ENCODE measurements at regions of chr4 and their contacts with region 1.

Region 1: DNA sequence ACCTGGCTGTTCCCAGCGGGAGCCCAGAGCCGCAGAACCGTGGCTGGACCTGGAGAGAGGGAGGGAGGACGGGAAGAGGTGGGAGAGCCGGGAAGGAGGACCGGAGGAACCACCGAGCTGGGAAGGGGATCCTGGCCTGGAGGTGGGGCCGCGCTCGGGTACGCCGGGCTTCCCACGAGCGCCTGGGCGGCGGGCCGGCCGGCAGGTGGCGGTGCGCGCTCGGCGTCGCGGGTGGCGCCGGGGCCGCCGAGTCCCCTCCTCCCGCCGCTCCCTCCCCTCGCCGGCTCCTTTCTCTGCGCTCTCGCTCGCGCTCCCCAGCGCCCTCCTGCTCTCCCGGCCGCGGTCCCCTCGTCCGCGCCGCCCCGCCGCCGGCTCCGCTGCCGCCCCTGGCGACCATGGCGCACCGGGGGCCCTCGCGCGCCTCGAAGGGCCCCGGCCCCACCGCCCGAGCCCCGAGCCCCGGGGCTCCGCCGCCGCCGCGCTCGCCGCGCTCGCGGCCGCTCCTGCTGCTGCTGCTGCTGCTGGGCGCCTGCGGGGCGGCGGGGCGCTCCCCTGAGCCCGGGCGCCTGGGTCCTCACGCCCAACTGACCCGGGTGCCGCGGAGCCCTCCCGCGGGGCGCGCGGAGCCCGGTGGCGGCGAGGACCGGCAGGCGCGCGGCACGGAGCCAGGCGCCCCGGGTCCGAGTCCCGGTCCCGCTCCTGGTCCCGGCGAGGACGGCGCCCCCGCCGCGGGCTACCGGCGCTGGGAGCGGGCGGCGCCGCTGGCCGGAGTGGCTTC is at the start of gene SORCS2:
- DNase-seq: no peak
- ATAC-seq: peak; percentile 83
- total RNA-seq, gene SORCS2: 1.1 TPM

Region 2: DNA sequence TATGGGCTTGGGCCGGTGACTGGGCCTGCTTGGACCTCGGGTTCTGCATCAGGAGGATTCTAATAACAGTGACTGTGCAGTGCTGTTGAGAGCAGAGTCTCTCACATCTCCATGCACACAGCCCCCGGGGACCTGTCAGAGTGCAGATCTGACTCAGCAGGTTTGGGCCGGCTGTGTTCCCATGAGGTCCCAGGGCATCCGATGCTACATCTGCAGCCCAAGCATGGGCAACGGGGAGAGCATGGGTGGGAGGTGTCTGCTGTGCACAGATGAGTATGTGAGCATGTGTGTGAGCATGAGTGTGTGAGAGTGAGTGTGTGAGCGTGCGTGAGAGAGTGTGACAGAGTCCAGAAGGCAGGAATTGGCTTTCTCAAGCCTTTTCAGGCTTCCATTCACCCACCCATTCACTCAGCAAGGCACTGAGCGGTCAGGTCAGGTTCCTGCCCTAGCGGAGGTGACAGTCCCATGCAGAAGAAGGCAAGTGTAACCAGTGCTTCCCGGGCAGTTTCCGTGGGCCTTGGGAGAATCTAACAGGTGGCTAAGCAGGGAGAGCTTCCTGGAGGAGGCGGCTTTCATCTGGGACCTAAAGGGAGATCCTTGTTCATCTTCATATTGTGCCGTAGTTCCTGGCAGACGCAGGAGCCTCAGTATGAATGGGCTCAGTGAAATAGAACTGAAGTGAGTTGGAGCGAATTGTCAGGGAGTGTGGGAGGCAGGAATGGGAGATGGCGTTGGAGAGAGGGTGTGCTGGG is 62.5 kb after region 1 on chr4:
- intact Hi-C with region 1: loop called (anchors 5 kb)
- DNase-seq: no peak
- ATAC-seq: no peak

Region 3: DNA sequence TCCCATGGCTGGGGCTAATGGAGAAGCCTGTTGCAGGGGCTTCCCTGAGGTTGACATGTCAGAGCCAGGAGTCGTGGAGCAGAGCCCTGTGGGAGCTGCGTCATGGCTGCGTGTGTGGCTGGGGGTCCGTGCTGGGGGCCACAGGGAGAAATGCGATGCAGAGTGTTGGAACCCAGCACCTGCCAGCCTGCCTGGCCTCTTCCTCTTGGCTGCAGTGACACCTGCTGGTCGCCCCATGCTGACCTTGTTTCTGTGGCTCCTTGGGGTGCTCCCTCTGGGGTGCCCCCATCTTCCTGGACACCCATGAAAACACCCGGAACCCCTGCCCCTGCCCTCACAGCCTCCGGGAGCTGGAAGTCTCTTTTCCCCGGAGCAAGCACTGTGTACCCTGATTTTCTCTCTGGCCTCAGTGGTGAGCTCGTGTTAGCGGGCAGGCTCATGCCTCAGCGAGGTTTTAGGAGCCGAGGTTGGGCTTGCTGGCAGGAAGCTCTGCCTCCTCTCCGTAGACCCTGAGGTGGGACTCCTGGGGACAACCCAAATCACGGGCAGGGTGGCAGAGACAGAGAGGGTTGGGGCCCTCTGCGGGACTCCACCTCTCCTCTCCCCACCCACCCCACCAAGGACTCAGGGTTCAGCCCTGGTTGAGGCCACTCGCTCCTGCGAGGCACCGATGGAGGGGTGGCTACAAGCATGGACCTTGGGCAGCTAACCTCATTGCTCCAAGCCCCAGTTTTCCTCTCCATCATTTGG is 103.6 kb after region 1 on chr4:
- intact Hi-C with region 1: loop called (anchors 1 kb)
- DNase-seq: peak; percentile 66
- ATAC-seq: peak; percentile 39

Region 4: GRCh38 chr4:7332216-7333023 is 140.0 kb after region 1 on chr4:
- intact Hi-C with region 1: loop called (anchors 2 kb)
- DNase-seq: peak; percentile 73
- ATAC-seq: peak; percentile 23

Region 5: DNA sequence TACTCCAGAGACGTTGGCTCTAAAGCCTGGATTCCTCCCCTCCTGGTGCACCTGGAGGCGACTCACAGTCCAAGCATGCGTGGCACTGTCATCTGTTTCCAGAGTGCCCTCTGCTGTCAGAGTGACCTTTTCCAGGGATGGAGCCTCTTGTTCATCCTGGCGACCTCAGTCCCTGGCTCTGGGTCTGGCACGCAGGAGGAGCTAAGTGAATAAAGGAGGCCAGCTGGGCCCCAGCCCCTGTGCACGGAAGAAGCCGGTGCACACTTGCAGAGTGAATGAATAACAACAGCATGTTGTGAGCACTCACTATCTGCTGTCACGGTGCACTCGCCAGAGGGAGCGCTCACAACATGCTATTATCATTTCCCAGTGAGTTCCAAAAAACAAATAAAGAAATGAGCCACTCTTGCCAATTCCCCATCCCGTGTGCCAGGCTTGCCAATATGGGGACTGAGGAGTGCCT is 270.1 kb after region 1 on chr4:
- intact Hi-C with region 1: loop called (anchors 2 kb)
- DNase-seq: no peak
- ATAC-seq: peak; percentile 57

Region 6: GRCh38 chr4:7719354-7720174 is 527.1 kb after region 1 on chr4:
- intact Hi-C with region 1: loop called (anchors 5 kb)
- DNase-seq: peak; percentile 73
- ATAC-seq: peak; percentile 58

Measured in Right ventricle myocardium inferior (tissue), 1 donor.